ENCODE measurements at regions of chr9 and their contacts with region 1.

Region 1: DNA sequence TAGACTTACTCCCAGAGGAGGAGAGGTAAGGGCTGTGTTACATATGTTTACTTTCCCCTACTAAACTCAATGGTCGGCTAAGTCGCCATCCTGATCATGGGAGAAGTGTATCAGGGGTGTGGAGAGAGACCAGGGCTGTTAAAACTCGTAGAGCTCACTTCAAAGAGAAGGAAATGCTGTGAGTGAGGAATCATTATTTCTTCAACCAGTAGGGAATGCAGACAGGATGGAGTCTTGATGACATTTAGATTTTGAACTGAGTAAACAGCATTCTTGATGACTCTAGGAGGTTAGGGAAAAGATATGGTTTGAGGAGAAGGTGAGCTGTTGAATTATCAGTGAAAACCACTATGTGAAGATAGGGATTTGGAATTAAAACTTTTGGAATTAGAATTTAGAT is 17.3 kb downstream of the RECK start:
- DNase-seq: no peak
- ATAC-seq: no peak
- H3K4me3 ChIP-seq: no peak overlapping the region
- H3K4me3 Mint-ChIP-seq: no peak overlapping the region
- H3K27ac ChIP-seq: no peak overlapping the region
- H3K27ac Mint-ChIP-seq: no peak overlapping the region
- H3K4me1 ChIP-seq: no peaks in the 10 kb centered on the region
- H3K4me1 Mint-ChIP-seq: peaks cover 5% of the 10 kb centered on the region
- H3K27me3 ChIP-seq: no peaks in the 10 kb centered on the region
- H3K27me3 Mint-ChIP-seq: no peaks in the 10 kb centered on the region
- CTCF ChIP-seq: no peak

Region 2: DNA sequence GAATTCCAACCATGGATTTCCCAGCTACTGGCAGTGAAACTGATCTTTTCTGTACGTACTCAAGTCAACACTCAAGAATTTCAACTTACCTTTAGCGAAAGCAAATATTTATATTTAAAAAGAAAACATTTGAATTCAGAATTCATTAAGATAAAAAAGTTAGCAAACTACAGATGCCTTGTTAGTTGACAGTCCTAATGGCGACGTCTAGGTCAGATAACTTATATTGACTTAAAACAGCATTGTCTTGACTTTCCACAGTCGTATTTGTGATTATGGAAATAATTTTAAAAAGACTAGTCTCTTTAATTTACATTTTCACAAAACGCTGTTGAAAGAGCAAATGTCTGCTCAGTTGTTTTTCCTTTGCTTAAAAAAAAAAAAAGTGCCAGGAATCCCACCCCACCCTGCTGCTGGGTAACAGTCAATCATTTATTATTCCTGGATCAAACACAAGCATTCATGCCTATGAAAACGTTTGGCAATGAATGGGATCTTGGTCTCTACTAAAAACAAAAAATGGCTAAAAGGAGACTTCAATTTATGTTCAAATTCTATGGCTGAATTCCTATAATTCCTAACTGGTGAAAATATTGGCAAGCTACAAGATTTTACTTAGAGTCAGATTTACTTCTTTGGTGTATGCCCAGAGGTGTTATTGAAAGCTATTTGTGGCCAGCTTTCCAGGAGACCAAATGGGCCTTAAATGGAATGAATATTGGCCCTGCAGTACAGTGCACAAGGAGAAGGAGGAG is 118.0 kb before region 1 on chr9:
- CTCF ChIA-PET with region 1: no interaction called
- POLR2A ChIA-PET with region 1: no interaction called
- intact Hi-C with region 1: no loop called
- DNase-seq: no peak
- ATAC-seq: no peak
- H3K4me3 ChIP-seq: no peak overlapping the region
- H3K4me3 Mint-ChIP-seq: no peak overlapping the region
- H3K27ac ChIP-seq: no peak overlapping the region
- H3K27ac Mint-ChIP-seq: no peak overlapping the region
- H3K4me1 ChIP-seq: peaks cover 34% of the 10 kb centered on the region
- H3K4me1 Mint-ChIP-seq: peaks cover 68% of the 10 kb centered on the region
- H3K27me3 ChIP-seq: no peaks in the 10 kb centered on the region
- H3K27me3 Mint-ChIP-seq: no peaks in the 10 kb centered on the region
- CTCF ChIP-seq: no peak

Region 3: GRCh38 chr9:36074870-36075532 is 21.0 kb after region 1 on chr9:
- CTCF ChIA-PET with region 1: no interaction called
- POLR2A ChIA-PET with region 1: no interaction called
- intact Hi-C with region 1: loop called in 1 of 2 experiments (anchors 2 kb)
- DNase-seq: no peak
- ATAC-seq: no peak
- H3K4me3 ChIP-seq: no peak overlapping the region
- H3K4me3 Mint-ChIP-seq: no peak overlapping the region
- H3K27ac ChIP-seq: no peak overlapping the region
- H3K27ac Mint-ChIP-seq: no peak overlapping the region
- H3K4me1 ChIP-seq: no peaks in the 10 kb centered on the region
- H3K4me1 Mint-ChIP-seq: no peaks in the 10 kb centered on the region
- H3K27me3 ChIP-seq: no peaks in the 10 kb centered on the region
- H3K27me3 Mint-ChIP-seq: no peaks in the 10 kb centered on the region
- CTCF ChIP-seq: no peak

Region 4: DNA sequence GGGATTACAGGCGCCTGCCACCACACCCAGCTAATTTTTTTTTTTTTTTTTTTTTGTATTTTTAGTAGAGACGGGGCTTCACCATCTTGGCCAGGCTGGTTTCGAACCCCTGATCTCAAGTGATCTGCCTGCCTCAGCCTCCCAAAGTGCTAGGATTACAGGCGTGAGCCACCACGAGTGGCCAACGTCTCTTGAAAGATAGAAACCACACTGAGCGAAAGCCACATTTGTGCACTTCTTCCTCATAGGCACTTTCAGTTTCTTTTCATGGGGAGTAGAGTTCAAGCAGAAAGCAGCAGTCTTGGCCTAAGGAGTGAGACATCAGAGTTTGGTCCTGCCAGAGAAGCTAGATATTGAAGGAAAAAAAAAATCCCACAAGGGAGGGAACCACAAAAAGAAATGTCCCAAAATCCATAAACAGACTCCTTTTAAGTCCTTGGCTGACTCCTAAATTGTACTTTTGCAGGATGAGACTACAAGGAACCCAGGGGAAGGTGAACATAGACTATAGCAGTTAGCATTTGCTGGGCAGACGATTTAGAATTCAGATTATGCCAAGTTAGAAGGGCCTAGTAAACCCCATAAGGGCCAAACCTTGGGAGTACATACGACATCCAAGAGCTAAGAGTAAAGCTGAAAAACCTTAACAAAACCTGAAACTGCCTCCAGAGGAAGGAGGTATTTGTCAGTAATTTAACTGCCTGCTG is 38.7 kb after region 1 on chr9:
- CTCF ChIA-PET with region 1: no interaction called
- POLR2A ChIA-PET with region 1: no interaction called
- intact Hi-C with region 1: no loop called
- DNase-seq: peak in 12 of 14 experiments; percentile 2 to 74 (median 16)
- ATAC-seq: peak; percentile 84
- H3K4me3 ChIP-seq: peak overlapping the region; percentile 18
- H3K4me3 Mint-ChIP-seq: peak overlapping the region; percentile 22
- H3K27ac ChIP-seq: no peak overlapping the region
- H3K27ac Mint-ChIP-seq: peak overlapping the region; percentile 81
- H3K4me1 ChIP-seq: peaks cover 8% of the 10 kb centered on the region
- H3K4me1 Mint-ChIP-seq: peaks cover 12% of the 10 kb centered on the region
- H3K27me3 ChIP-seq: no peaks in the 10 kb centered on the region
- H3K27me3 Mint-ChIP-seq: no peaks in the 10 kb centered on the region
- CTCF ChIP-seq: no peak

Region 5: DNA sequence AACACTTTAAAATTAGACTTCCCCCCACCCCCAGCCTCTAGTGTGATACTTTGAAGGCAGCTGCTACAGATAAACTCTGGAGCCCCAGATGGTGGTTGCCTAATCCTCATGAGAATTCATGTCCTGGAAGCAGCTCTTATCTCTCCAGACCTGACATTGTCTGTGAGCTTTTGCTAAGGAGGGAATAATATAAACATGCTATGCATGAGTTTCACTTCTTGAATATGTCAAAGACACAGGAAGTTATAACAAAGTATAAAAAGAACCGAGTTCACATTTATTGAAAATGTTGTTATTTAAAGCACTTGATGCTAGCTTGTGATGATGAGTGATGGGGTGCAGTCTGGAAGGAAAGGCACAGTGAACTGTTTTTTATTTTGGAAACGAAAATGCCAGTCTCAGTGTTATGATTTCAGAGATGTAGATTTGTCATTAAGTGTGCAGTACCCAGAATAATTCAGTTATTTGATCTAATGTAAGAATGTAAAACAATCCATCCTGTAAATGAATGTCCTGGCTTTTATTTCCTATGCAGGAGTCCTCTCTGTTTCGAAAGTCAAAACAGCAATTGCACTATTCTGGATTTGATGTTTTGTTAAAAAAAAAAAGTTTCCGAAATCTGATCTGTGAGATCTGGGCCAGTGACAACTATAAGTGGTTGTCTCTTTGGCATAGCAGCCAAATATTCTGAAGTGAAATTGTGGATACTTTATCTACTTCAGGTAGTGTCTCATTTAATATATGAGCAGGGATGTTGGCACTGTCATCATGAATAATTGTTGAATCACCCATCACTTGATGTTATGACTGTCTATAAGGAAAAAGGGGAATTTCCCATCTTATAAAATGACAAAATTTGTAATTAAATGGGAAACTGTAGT is 1143.4 kb after region 1 on chr9:
- CTCF ChIA-PET with region 1: no interaction called
- POLR2A ChIA-PET with region 1: no interaction called
- intact Hi-C with region 1: loop called in 1 of 2 experiments (anchors 10 kb)
- DNase-seq: peak in 4 of 14 experiments; percentile 4 to 21 (median 11)
- ATAC-seq: no peak
- H3K4me3 ChIP-seq: no peak overlapping the region
- H3K4me3 Mint-ChIP-seq: no peak overlapping the region
- H3K27ac ChIP-seq: no peak overlapping the region
- H3K27ac Mint-ChIP-seq: peak overlapping the region; percentile 57
- H3K4me1 ChIP-seq: peaks cover 3% of the 10 kb centered on the region
- H3K4me1 Mint-ChIP-seq: peaks cover 71% of the 10 kb centered on the region
- H3K27me3 ChIP-seq: no peaks in the 10 kb centered on the region
- H3K27me3 Mint-ChIP-seq: no peaks in the 10 kb centered on the region
- CTCF ChIP-seq: no peak

Measured in CD4-positive, alpha-beta T cell (primary cell).